ENCODE measurements at regions of chr9 and their contacts with region 1.

Region 1: GRCh38 chr9:16058131-16058549 is 505.3 kb downstream of the CCDC171 start:
- DNase-seq: peak; percentile 93
- ATAC-seq: peak; percentile 76
- H3K4me3 ChIP-seq: no peak overlapping the region
- H3K27ac ChIP-seq: peak overlapping the region; percentile 100
- H3K4me1 ChIP-seq: peaks cover 42% of the 10 kb centered on the region
- H3K27me3 ChIP-seq: no peaks in the 10 kb centered on the region
- CTCF ChIP-seq: peak; percentile 55

Region 2: GRCh38 chr9:15867988-15868387 is 190.2 kb before region 1 on chr9:
- CTCF ChIA-PET with region 1: no interaction called
- POLR2A ChIA-PET with region 1: no interaction called
- intact Hi-C with region 1: no loop called
- DNase-seq: no peak
- ATAC-seq: no peak
- H3K4me3 ChIP-seq: no peak overlapping the region
- H3K27ac ChIP-seq: no peak overlapping the region
- H3K4me1 ChIP-seq: no peaks in the 10 kb centered on the region
- H3K27me3 ChIP-seq: no peaks in the 10 kb centered on the region
- CTCF ChIP-seq: no peak

Region 3: DNA sequence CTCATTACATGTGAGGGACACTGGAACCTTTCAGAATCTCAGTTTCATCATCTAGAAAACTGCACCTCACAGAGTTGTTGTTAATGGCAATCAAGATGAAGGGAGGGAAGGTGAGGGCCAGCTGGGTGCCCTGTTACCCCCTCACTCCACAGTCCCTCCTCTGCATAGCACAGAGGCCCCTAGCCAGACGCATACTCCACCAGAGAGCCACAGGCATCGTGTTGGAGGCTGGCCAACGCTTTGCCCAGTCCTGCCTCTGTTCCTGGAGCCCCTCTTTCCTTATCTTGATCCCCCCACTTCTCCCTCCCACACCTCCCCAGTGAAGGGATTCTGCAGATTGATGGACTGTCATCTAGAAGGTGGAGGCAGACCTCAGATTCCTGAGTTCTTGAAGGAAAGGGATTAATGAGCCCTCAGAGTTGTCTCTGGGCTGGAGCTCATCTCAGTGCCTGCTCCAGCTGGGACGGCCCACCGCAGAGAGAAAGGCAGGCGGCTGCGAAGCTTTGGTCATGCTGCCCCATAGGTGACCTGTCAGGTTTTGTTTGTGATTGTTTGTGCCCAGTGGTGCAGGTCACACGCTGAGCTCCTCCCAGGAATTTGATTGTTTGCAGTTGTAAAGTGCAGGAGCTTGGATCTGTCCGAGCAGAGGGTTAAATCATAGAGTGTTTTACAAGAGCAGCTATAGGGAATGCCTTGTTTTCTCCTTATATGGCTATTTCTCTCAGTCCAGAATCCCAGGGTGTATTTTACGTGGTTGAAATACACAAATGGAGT is 18.0 kb before region 1 on chr9:
- CTCF ChIA-PET with region 1: interaction called, 7 read pairs
- POLR2A ChIA-PET with region 1: interaction called, 3 read pairs
- intact Hi-C with region 1: loop called (anchors 1 kb)
- DNase-seq: peak; percentile 70
- ATAC-seq: peak; percentile 83
- H3K4me3 ChIP-seq: no peak overlapping the region
- H3K27ac ChIP-seq: peak overlapping the region; percentile 62
- H3K4me1 ChIP-seq: peaks cover 28% of the 10 kb centered on the region
- H3K27me3 ChIP-seq: no peaks in the 10 kb centered on the region
- CTCF ChIP-seq: no peak

Region 4: DNA sequence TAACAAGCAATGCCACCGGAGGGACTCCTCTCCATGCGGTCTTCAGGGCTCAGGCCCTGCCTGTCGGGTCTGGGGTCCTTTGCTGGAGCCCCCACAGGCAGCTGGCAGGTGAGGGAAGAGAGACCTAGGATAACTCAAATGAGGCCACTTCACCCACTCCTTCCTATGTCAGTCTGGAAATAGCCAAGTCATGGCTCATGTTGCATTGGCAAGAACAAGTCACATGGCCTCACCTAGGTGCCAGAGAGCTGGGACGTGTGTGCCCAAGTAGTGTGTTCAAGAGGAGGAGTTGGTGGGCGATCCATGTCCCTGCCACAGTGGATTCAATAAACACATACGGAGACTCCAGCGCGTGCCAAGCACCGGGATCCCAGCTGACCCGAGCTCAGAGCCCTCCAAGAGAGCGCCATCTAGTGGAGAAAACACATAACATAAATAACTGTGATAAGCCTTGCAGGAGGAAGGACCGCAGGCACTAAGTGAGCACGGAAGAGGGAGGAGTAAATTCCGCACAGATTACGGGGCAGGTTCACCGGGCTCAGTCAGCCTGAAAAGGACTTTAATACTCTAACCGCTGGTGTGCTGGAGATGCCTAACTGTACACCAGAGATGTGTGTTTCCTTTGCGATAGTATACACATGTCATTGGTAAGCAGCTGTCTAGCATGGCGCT is 75.6 kb after region 1 on chr9:
- CTCF ChIA-PET with region 1: no interaction called
- POLR2A ChIA-PET with region 1: no interaction called
- intact Hi-C with region 1: loop called (anchors 1 kb)
- DNase-seq: peak; percentile 88
- ATAC-seq: peak; percentile 86
- H3K4me3 ChIP-seq: peak overlapping the region; percentile 36; the same call in 1 of the 2 replicates
- H3K27ac ChIP-seq: peak overlapping the region; percentile 97
- H3K4me1 ChIP-seq: peaks cover 27% of the 10 kb centered on the region
- H3K27me3 ChIP-seq: no peaks in the 10 kb centered on the region
- CTCF ChIP-seq: peak; percentile 81

Region 5: DNA sequence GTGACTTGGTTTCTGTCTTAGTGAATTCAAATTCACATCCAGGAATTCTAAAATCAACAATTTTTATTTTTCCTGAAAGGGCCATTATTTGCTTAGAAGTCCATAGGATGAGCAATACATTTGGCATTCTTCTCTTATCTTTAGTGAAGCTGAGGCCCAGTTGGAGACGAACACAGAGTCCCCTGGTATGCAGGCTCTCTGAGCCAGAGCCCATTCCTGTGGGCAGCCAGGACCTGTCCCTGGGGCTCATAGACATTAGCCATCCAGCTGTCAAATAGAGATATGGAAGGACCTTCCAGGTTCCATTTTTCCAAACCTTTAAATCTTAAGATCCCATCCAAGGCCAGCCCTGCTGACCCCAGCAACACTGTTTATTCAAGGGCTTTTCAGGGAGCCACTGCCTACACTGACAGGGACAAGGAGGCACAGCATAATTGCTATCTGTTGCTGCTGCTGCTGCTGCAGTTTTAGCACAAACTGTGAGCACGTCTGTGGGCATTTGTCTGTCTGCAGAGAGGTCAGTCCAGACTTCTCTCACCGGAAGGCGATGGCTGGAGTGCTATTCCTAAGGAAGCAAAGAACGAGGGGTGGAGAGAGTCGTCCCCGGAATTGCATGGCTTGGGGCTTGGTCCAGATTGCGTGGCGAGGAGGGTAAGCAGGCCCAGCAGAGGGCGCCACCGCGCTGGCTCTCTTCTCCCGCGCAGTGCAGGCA is 133.7 kb after region 1 on chr9:
- CTCF ChIA-PET with region 1: no interaction called
- POLR2A ChIA-PET with region 1: no interaction called
- intact Hi-C with region 1: loop called (anchors 5 kb)
- DNase-seq: peak; percentile 74
- ATAC-seq: peak; percentile 91
- H3K4me3 ChIP-seq: no peak overlapping the region
- H3K27ac ChIP-seq: peak overlapping the region; percentile 83
- H3K4me1 ChIP-seq: peaks cover 31% of the 10 kb centered on the region
- H3K27me3 ChIP-seq: no peaks in the 10 kb centered on the region
- CTCF ChIP-seq: peak; percentile 73

Region 6: DNA sequence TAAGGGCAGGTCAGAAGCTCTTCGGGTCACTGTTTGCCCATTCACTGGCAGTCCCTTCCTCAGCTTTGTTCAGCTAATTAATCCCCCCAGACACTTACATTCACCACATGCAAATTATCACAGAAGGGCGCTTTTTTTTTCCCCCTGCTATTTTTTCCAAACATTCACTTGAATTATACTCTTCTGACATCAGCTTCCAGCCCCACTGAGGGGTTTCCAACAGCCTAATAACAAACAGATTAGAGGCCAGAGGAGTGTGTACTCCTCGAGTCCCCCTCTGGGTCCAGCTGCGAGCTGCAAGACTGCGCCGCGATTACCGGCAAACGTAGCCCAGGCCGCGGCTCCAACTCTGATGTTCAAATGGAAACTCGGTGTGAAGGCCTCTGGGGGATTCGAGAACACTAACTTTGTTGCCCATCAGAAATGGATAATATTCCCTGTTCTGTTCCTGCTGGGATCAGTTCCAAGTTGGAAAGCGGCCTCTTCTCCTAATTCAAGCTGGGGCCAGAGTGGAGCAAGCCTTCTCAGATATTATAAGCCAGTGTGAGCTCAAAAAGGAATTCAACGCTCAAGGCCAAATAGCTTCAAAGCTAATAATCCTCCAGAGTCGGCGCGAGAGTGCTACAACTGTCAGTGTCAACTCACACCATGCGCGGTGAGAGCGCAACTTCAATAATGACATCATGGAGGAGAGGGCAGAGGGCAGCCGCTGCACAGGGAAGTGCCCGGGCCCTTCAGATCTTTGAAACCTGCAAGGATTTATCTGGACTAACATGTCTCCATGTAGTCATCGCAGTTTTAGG is 251.5 kb after region 1 on chr9:
- CTCF ChIA-PET with region 1: no interaction called
- POLR2A ChIA-PET with region 1: no interaction called
- intact Hi-C with region 1: no loop called
- DNase-seq: no peak
- ATAC-seq: no peak
- H3K4me3 ChIP-seq: no peak overlapping the region
- H3K27ac ChIP-seq: no peak overlapping the region
- H3K4me1 ChIP-seq: no peaks in the 10 kb centered on the region
- H3K27me3 ChIP-seq: no peaks in the 10 kb centered on the region
- CTCF ChIP-seq: no peak

Measured in PC-3 (cell line).